GM12878 (cell line): ENCODE measurements at regions of chr1 and their contacts with region 1.

Region 1: DNA sequence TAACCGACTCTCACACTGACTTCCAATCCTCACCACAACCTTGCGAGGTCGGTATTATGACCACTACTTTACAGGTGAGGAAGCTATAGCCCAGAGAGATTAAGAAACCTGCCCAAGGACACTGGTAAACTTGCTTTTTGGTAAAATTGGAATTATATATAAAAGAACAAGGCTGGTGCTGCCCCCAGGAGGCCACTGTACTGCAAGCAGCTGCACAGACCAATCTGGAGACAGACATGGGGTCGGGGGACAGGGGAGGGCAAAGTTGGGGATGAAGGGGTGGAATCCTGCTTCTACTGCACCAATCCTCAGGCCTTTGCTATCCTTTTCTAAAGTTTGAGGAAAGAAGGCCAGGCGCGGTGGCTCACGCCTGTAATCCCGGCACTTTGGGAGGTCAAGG is 280.8 kb downstream of the SPATA17 start:
- DNase-seq: no peak
- ATAC-seq: peak; percentile 41; the same call in 2 of the 3 replicates
- H3K4me3 ChIP-seq: no peak overlapping the region
- H3K27ac ChIP-seq: no peak overlapping the region
- H3K4me1 ChIP-seq: no peaks in the 10 kb centered on the region
- H3K27me3 ChIP-seq: no peaks in the 10 kb centered on the region
- CTCF ChIP-seq: peak in 1 of 3 experiments; percentile 14; a peak in 1 of 6 replicates
- EP300 ChIP-seq: no peak
- POLR2A ChIP-seq: no peak
- RAD21 ChIP-seq: no peak

Region 2: DNA sequence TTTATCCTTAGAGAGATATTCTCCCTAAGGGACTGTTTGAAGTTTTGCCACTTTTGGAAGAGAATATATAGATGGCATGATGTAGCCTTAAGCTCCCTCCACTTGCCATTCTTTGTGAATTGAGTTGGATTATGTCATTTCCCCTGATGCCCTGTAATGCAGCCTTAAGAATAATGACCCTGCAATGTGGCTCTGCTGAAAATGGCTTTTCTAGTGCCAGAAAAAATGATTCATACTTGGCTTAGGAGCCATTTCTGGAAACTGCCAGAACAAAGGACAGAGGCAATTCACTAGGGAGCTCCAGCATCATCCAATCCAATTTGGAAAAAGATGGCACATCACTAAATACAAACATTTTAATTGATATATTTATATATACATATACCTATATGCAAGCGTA is 15.4 kb before region 1 on chr1:
- CTCF ChIA-PET with region 1: no interaction called
- POLR2A ChIA-PET with region 1: no interaction called
- RAD21 ChIA-PET with region 1: no interaction called
- SMC1A ChIA-PET with region 1: no interaction called
- in situ Hi-C with region 1: no loop called
- intact Hi-C with region 1: no loop called
- DNase-seq: no peak
- ATAC-seq: no peak
- H3K4me3 ChIP-seq: no peak overlapping the region
- H3K27ac ChIP-seq: no peak overlapping the region
- H3K4me1 ChIP-seq: no peaks in the 10 kb centered on the region
- H3K27me3 ChIP-seq: no peaks in the 10 kb centered on the region; a peak in 2 of 4 replicates
- CTCF ChIP-seq: no peak
- EP300 ChIP-seq: no peak
- POLR2A ChIP-seq: no peak
- RAD21 ChIP-seq: no peak

Region 3: DNA sequence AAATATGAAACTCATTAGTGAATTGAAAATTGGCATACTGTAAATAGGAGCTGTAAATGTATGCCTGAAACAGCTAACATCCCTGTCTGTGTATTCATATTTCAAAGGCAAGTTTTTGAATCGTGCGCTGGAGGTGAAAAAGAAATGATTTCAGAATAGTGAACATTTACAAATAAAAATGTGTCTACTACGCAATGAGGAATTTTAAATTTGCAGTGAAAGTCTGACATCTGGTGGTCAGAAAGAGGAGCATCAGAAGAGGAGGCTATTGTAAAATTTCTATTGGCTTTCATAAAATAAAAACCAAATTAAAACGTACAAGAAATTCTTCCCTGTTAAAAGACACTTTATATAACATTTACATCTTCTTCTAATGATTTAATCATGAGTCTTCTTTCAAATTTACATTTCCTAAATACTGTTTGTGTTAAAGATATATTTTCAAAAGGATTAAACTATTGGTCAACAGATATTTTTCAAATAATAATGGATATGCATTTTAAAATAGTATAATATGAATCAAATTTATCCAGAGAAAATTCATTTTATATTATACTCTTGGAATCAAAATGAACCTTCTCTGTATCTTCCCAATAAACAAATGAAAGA is 259.5 kb after region 1 on chr1:
- CTCF ChIA-PET with region 1: no interaction called
- POLR2A ChIA-PET with region 1: no interaction called
- RAD21 ChIA-PET with region 1: no interaction called
- SMC1A ChIA-PET with region 1: no interaction called
- in situ Hi-C with region 1: no loop called
- intact Hi-C with region 1: loop called (anchors 10 kb)
- DNase-seq: no peak
- ATAC-seq: peak; percentile 52; the same call in 1 of the 3 replicates
- H3K4me3 ChIP-seq: no peak overlapping the region
- H3K27ac ChIP-seq: no peak overlapping the region
- H3K4me1 ChIP-seq: no peaks in the 10 kb centered on the region
- H3K27me3 ChIP-seq: peaks cover 0 to 2% of the 10 kb centered on the region in 2 experiments; a peak in 1 of 4 replicates
- CTCF ChIP-seq: peak; percentile 55 to 62 (median 59)
- EP300 ChIP-seq: no peak
- POLR2A ChIP-seq: no peak
- RAD21 ChIP-seq: peak; percentile 77